Head of caudate nucleus (tissue), 42 donors: ENCODE measurements at regions of chr1 and their contacts with region 1.

Region 1: GRCh38 chr1:90841473-90841872 is 124.4 kb upstream of the BARHL2 start:
- DNase-seq: no peak

Region 2: DNA sequence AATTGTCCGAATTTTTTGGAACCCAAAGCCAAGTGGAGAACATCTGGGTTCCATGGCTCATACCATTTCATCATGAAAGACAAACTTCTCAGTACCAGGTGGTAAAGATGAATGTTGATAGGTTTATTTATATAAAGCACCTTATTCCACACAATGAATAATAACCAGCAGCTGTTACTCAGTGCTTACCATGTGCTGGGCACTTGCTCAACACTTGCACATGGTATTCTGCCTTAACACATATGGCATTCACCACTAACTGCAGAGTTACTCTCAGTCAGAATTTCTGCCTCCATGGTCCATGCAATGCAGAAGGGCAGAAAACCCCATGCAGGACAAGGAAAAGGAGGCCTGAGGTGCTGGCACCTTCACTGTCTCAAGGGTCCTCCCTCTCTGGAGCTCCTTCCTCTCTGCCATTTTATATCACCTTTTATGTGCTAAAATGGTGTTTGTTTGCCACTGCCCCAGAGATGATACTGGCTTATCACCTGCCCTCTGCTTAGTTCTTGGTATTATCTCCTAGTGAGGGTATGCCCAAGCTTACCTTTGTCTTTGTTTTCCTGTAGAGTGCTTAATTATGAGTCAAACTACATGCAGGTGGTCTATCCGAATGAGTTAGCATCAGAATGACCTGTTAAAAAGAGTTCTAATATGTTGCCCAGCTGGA is 923.2 kb before region 1 on chr1:
- intact Hi-C with region 1: no loop called
- DNase-seq: no peak

Region 3: DNA sequence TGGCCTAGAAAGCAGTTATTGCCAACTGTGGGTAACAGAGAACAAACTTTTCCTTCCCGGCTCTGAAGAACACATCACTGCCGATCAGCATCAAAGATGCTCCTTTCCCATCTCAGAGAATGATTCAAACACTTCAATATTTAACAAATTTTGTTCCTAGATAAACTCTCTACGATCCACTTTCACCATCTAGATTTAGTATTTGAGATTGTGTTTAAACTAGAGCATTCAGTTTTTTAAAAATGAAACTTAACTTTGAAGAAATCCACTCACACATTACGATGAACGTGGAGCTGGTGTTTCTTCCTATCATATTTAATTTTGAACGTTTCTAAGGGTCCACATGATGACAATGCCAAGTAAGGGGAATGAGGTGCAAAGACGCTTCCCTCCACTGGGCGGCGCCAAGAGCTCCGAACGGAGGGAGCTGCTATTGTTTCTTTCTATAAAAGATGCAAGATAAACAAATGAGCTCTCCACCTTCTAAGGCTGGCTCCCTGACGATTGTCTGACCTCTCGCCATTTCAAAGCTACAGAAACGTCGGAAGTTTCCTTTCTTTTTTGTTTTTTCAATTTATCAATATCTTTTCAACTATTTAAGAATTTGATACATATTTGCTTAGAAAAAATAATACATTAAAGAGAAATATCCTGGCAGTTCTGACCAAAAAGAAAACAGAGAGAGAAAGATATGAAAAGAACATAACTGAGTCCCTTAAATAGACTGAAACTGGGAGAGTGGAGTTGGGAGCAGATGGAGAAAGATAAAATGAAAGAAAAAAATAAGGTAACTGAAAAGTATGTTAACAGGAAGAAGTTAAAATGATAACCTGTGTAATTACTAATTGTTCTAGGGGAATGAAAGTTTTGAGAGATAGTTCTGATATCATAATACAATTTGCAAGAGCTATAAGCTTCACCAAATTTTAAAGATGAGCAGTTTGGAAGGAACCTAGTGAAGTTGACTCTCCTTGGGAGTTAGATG is 120.0 kb before region 1 on chr1:
- intact Hi-C with region 1: loop called (anchors 10 kb)
- DNase-seq: peak in 30 of 42 donors; percentile 24 to 86 (median 52)

Region 4: GRCh38 chr1:91020967-91021685 is 179.7 kb after region 1 on chr1:
- intact Hi-C with region 1: no loop called
- DNase-seq: peak; percentile 23 to 77 (median 57)